Activated CD4-positive, alpha-beta T cell treated with anti-CD3 and anti-CD28 coated beads, Interleukin-2, amount 10 ng/mL, durations not matched to agents 7 days and 5 days (primary cell): ENCODE measurements at regions of chr6 and their contacts with region 1.

Region 1: GRCh38 chr6:38702558-38703397 is at the start of gene GLO1:
- DNase-seq: peak; percentile 97
- H3K4me3 Mint-ChIP-seq: peak within 1 kb of the TSS; percentile 82
- H3K27ac Mint-ChIP-seq: peak within 1 kb of the TSS; percentile 89
- H3K4me1 Mint-ChIP-seq: peaks cover 41% of the 10 kb centered on the region
- H3K27me3 Mint-ChIP-seq: peaks cover 11% of the 10 kb centered on the region
- total RNA-seq, gene GLO1: 77.1 to 85.6 TPM

Region 2: GRCh38 chr6:38612143-38612965 is 90.4 kb before region 1 on chr6:
- CTCF ChIA-PET with region 1: no interaction called
- POLR2A ChIA-PET with region 1: no interaction called
- DNase-seq: no peak
- H3K4me3 Mint-ChIP-seq: no peak overlapping the region
- H3K27ac Mint-ChIP-seq: no peak overlapping the region
- H3K4me1 Mint-ChIP-seq: no peaks in the 10 kb centered on the region
- H3K27me3 Mint-ChIP-seq: no peaks in the 10 kb centered on the region

Region 3: GRCh38 chr6:38640216-38640906 is 62.4 kb before region 1 on chr6:
- CTCF ChIA-PET with region 1: no interaction called
- POLR2A ChIA-PET with region 1: no interaction called
- DNase-seq: no peak
- H3K4me3 Mint-ChIP-seq: peak overlapping the region; percentile 87
- H3K27ac Mint-ChIP-seq: peak overlapping the region; percentile 95
- H3K4me1 Mint-ChIP-seq: peaks cover 44% of the 10 kb centered on the region
- H3K27me3 Mint-ChIP-seq: no peaks in the 10 kb centered on the region

Region 4: GRCh38 chr6:38713812-38714211 is 11.0 kb after region 1 on chr6:
- CTCF ChIA-PET with region 1: interaction called, 23 read pairs
- POLR2A ChIA-PET with region 1: no interaction called
- DNase-seq: peak; percentile 79
- H3K4me3 Mint-ChIP-seq: peak overlapping the region; percentile 0
- H3K27ac Mint-ChIP-seq: peak overlapping the region; percentile 93
- H3K4me1 Mint-ChIP-seq: peaks cover 42% of the 10 kb centered on the region
- H3K27me3 Mint-ChIP-seq: peaks cover 29% of the 10 kb centered on the region

Region 5: GRCh38 chr6:38736951-38737350 is 34.2 kb after region 1 on chr6:
- CTCF ChIA-PET with region 1: no interaction called
- POLR2A ChIA-PET with region 1: no interaction called
- DNase-seq: no peak
- H3K4me3 Mint-ChIP-seq: no peak overlapping the region
- H3K27ac Mint-ChIP-seq: no peak overlapping the region
- H3K4me1 Mint-ChIP-seq: no peaks in the 10 kb centered on the region
- H3K27me3 Mint-ChIP-seq: peaks cover 57% of the 10 kb centered on the region